ENCODE measurements at regions of chrX and their contacts with region 1.

Region 1: GRCh38 chrX:23766650-23767551 is 16.1 kb upstream of the SAT1 start:
- DNase-seq: no peak
- H3K4me3 ChIP-seq: no peak overlapping the region
- H3K27ac ChIP-seq: no peak overlapping the region
- H3K4me1 ChIP-seq: peaks cover 0 to 2% (median 0%) of the 10 kb centered on the region in 4 experiments; a peak in 2 of 7 replicates
- H3K27me3 ChIP-seq: no peaks in the 10 kb centered on the region
- CTCF ChIP-seq: no peak
- EP300 ChIP-seq: no peak
- POLR2A ChIP-seq: no peak
- RAD21 ChIP-seq: no peak

Region 2: DNA sequence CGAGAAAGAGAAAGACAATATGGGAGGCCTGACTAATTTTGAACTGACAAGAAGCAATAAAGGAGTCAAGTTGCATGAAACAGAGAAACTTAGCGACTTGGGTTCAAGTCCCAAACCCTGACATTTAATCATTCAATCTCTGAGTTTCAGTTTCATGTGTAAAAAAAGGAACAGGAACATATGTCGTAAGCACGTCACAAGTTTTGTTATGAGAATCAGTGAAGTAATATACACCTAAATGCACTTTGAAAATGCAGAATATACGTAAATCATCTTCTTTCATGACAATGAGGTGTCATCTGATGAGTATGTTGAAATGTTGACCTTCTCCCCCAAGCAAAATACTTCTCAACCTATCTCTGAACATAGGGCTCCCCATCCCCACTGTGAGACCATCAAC is 34.2 kb before region 1 on chrX:
- CTCF ChIA-PET with region 1: no interaction called
- POLR2A ChIA-PET with region 1: no interaction called
- DNase-seq: no peak
- H3K4me3 ChIP-seq: no peak overlapping the region
- H3K27ac ChIP-seq: no peak overlapping the region
- H3K4me1 ChIP-seq: no peaks in the 10 kb centered on the region
- H3K27me3 ChIP-seq: no peaks in the 10 kb centered on the region
- CTCF ChIP-seq: no peak
- EP300 ChIP-seq: no peak
- POLR2A ChIP-seq: no peak
- RAD21 ChIP-seq: no peak

Region 3: GRCh38 chrX:23756157-23756559 is 10.7 kb before region 1 on chrX:
- CTCF ChIA-PET with region 1: interaction called, 12 read pairs
- POLR2A ChIA-PET with region 1: no interaction called
- DNase-seq: peak in 1 of 2 experiments; percentile 61
- H3K4me3 ChIP-seq: no peak overlapping the region
- H3K27ac ChIP-seq: no peak overlapping the region
- H3K4me1 ChIP-seq: no peaks in the 10 kb centered on the region
- H3K27me3 ChIP-seq: no peaks in the 10 kb centered on the region
- CTCF ChIP-seq: peak; percentile 18 to 56 (median 54)
- EP300 ChIP-seq: no peak
- POLR2A ChIP-seq: no peak
- RAD21 ChIP-seq: peak; percentile 24 to 56; a peak in 3 of 4 replicates